Ascending aorta (tissue), 2 donors: ENCODE measurements at regions of chr12 and their contacts with region 1.

Region 1: DNA sequence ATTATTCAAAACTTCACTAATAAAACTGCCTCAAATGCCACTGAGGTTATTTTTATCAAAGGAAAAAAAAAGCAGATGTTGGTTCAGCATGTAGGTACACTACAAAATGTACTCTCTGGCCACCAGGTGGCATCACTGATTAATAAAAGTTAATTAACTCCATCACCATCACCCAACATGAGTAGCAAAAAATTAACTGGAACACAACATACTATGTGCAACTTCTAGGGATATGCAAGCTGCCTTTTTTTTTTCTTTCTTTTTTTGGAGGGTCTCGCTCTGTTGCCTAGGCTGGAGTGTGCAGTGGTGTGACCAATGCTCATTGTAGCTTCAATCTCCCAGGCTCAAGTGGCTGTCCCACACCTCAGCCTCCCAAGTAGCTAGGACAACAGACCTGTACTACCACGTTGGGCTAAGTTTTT is 43.8 kb upstream of the NR2C1 start:
- DNase-seq: peak in 1 of 2 donors; percentile 85
- H3K4me3 ChIP-seq: no peak overlapping the region
- H3K27ac ChIP-seq: peak overlapping the region; percentile 71 to 77
- H3K4me1 ChIP-seq: peaks cover 6 to 18% of the 10 kb centered on the region in 2 donors
- H3K27me3 ChIP-seq: no peaks in the 10 kb centered on the region
- CTCF ChIP-seq: peak; percentile 61 to 72 (median 65)

Region 2: DNA sequence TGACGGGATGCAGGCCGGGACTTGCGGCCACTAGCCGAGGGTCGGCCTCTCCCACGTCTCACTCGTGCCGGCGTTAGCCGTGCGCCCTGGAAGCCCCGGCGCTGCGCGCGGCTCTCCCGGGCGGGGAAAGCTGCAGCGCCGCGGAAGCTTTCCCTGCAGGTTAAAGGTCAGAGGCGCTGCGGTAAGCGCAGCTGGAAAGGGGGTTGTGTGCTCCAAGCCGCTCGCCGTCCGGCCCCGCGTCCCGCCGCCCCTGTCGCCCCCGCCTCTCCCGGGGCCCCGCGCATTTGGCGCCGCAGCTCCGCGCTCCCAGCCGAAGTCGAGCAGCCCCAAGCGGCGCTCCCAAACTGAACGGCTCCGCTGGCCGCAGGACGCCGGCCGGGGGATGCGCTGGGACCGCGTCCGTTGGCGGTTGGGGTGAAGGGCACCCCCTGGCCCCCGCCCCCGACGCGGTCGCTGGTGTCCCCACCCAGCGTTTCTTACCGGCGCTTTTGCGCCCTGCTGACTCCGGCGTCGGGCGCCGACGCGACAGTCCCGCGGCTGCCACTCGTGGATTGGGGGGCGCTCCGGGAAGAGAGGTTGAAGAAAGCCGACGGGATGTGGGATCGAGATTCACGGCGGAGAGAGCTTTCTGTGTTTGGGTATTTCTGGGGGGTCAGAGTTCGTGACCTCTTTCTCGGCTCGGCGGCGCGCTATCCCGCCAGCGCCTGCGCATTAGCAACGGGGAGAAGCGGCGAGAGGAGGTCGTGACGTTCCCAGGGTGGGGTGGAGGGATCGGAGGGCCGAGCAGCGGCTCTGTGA is 44.1 kb before region 1 on chr12 and contains the start of gene NR2C1:
- intact Hi-C with region 1: loop called (anchors 5 kb)
- DNase-seq: peak; percentile 68 to 95
- H3K4me3 ChIP-seq: peak within 1 kb of the TSS; percentile 82 to 98
- H3K27ac ChIP-seq: peak within 1 kb of the TSS; percentile 85 to 86
- H3K4me1 ChIP-seq: peaks cover 0 to 11% of the 10 kb centered on the region in 2 donors
- H3K27me3 ChIP-seq: no peaks in the 10 kb centered on the region
- CTCF ChIP-seq: no peak
- total RNA-seq, gene NR2C1: 42.3 TPM

Region 3: GRCh38 chr12:95217377-95218149 is 100.4 kb after region 1 on chr12 and contains the starts of genes FGD6 and VEZT:
- intact Hi-C with region 1: loop called (anchors 1 kb)
- DNase-seq: peak; percentile 98 to 100
- H3K4me3 ChIP-seq: peak within 1 kb of the TSS; percentile 83 to 90
- H3K27ac ChIP-seq: peak within 1 kb of the TSS; percentile 98 to 99
- H3K4me1 ChIP-seq: peaks cover 0 to 18% of the 10 kb centered on the region in 2 donors
- H3K27me3 ChIP-seq: no peaks in the 10 kb centered on the region
- CTCF ChIP-seq: peak; percentile 56 to 75 (median 67)
- total RNA-seq, gene FGD6: 2.0 TPM
- total RNA-seq, gene VEZT: 141 TPM

Region 4: DNA sequence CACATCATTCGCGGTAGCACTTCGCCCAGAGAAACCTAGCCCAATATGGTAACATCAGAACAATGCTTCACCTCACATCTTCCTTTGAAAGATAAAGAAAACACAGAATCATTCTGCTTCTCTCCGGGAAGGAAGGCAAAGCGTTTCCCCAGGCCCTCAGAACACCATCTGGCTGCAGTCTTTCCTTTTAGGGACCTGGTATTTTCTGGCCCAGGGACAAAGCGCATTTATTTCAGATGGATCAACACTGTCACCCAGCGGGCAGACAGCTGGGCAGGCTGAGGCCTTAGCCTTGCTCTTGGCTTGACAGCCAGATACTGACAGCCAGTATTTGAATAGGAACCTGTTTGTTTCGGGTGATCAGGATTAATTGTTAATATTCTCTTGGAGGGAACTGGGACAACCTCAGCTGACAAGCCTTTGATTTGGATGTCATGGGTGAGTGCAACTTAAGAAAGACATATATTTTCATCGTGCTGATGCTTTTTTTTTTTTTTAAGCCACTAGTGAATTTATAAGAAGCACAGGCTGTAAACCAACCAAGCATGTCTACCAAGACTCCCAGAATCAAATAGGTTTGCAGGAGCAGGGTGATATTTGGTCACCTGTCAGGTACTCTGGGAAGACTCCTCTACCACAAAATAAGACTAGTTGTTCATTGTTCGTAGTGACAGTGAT is 219.3 kb after region 1 on chr12:
- intact Hi-C with region 1: loop called (anchors 1 kb)
- DNase-seq: peak in 1 of 2 donors; percentile 82
- H3K4me3 ChIP-seq: peak overlapping the region in 1 of 2 donors; percentile 5
- H3K27ac ChIP-seq: peak overlapping the region; percentile 59 to 78
- H3K4me1 ChIP-seq: peaks cover 0 to 5% of the 10 kb centered on the region in 2 donors
- H3K27me3 ChIP-seq: no peaks in the 10 kb centered on the region
- CTCF ChIP-seq: peak; percentile 78 to 97 (median 85)

Region 5: DNA sequence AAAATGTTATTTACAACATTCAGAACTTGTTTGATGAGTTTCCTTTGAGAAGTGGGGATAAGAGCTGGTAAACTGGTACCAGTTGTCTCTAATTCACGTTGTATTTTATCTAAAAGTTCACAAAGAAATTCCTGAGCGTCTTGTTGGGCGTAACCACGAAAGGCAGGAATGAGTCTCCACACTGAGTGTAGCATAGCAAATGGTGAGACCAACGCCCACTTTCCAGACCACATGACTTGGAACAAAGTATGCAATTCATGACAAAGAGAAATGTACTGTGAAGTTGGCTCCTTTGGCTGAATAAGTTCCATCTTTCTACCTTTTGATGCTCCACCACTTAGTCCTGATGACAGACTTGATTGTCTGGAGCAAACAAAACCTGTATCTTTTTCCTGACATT is 415.7 kb after region 1 on chr12:
- intact Hi-C with region 1: loop called (anchors 5 kb)
- DNase-seq: no peak
- H3K4me3 ChIP-seq: no peak overlapping the region
- H3K27ac ChIP-seq: no peak overlapping the region
- H3K4me1 ChIP-seq: no peaks in the 10 kb centered on the region
- H3K27me3 ChIP-seq: no peaks in the 10 kb centered on the region
- CTCF ChIP-seq: no peak